ENCODE measurements at regions of chr22 and their contacts with region 1.

Region 1: GRCh38 chr22:20777420-20778177 is 3.7 kb downstream of the SERPIND1 start:
- DNase-seq: peak; percentile 97 to 99 (median 98)
- ATAC-seq: peak; percentile 97
- H3K4me3 ChIP-seq: no peak overlapping the region
- H3K27ac ChIP-seq: peak overlapping the region; percentile 69; the same call in 2 of the 3 replicates
- H3K4me1 ChIP-seq: peaks cover 21 to 32% of the 10 kb centered on the region in 2 experiments
- H3K27me3 ChIP-seq: no peaks in the 10 kb centered on the region
- CTCF ChIP-seq: peak in 2 of 3 experiments; percentile 90 to 99; a peak in 4 of 6 replicates
- EP300 ChIP-seq: peak; percentile 100
- POLR2A ChIP-seq: no peak
- RAD21 ChIP-seq: peak in 1 of 2 experiments; percentile 97; a peak in 2 of 4 replicates

Region 2: DNA sequence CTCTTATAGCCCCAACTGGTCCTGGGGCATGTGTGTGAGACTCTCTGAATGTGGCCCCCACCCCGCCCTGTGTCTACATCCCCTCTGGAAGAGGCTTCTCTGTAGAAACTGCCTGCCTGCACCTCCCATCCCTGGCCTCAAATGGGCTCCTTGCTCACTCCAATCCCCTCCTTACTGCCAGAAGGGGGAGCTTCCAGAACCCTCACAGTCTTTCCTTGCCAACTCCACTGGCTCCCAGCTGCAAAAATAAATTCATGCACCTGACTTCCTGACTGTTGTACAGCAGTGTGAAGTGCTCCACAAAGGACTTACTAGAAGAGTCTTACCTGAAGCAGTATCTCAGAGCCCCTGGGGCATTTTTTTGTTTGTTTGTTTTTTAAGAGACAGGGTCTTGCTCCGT is 18.9 kb before region 1 on chr22:
- CTCF ChIA-PET with region 1: interaction called, 4 read pairs
- POLR2A ChIA-PET with region 1: interaction called, 24 read pairs
- in situ Hi-C with region 1: no loop called
- intact Hi-C with region 1: no loop called
- DNase-seq: peak in 1 of 4 experiments; percentile 64
- ATAC-seq: peak; percentile 86
- H3K4me3 ChIP-seq: no peak overlapping the region
- H3K27ac ChIP-seq: no peak overlapping the region
- H3K4me1 ChIP-seq: no peaks in the 10 kb centered on the region
- H3K27me3 ChIP-seq: no peaks in the 10 kb centered on the region
- CTCF ChIP-seq: peak; percentile 64 to 76 (median 75)
- EP300 ChIP-seq: no peak
- POLR2A ChIP-seq: no peak
- RAD21 ChIP-seq: peak in 1 of 2 experiments; percentile 59; a peak in 2 of 4 replicates

Region 3: DNA sequence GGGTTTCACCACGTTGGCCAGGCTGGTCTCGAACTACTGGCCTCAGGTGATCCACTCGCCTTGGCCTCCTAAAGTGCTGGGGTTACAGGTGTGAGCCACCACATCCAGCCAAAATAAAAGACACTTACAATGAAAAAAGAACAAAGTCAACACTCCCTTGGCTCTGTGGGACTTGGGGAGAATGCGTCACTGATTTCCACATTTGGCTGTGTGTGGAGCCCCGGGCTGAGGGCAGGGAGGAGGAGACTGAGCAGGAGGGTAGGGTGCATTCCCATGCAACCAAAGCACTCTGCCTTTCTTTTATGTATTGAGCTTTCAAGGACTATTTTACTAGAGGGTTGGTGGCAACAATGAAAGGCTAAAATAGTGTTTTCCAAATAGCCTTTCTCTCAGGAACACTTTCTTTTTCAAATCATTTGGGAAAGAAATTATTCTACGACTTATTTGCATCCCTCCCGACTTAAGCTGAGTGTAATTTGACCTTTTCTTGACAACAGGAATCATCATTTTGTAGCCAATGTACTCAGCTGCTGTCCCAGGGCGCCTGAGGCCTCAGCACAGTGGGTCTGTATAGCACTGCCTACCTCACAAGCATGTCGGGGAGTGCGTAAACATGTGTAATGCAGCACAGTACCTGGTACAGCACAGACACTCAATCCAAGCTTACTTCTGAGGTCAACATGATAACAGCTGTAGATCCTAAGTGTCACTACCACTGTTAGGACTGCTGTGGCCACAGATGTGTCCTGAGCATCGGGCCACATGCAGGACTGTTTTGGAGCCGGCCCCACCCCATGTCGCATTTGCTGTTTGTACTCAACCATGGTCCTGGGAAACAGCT is 13.7 kb before region 1 on chr22:
- CTCF ChIA-PET with region 1: interaction called, 4 read pairs
- POLR2A ChIA-PET with region 1: interaction called, 24 read pairs
- in situ Hi-C with region 1: no loop called
- intact Hi-C with region 1: no loop called
- DNase-seq: no peak
- ATAC-seq: no peak
- H3K4me3 ChIP-seq: no peak overlapping the region
- H3K27ac ChIP-seq: no peak overlapping the region
- H3K4me1 ChIP-seq: peaks cover 2 to 4% of the 10 kb centered on the region in 2 experiments; a peak in 4 of 5 replicates
- H3K27me3 ChIP-seq: no peaks in the 10 kb centered on the region
- CTCF ChIP-seq: no peak
- EP300 ChIP-seq: no peak
- POLR2A ChIP-seq: no peak
- RAD21 ChIP-seq: no peak

Region 4: GRCh38 chr22:20852076-20852475 is 74.5 kb after region 1 on chr22:
- CTCF ChIA-PET with region 1: no interaction called
- POLR2A ChIA-PET with region 1: interaction called, 7 read pairs
- in situ Hi-C with region 1: no loop called
- intact Hi-C with region 1: loop called (anchors 2 kb)
- DNase-seq: peak; percentile 50 to 66 (median 58)
- ATAC-seq: peak; percentile 59
- H3K4me3 ChIP-seq: no peak overlapping the region
- H3K27ac ChIP-seq: 0 out of 3 replicates have a peak overlapping the region, but pooled peaks have one; percentile 0
- H3K4me1 ChIP-seq: peaks cover 40 to 46% of the 10 kb centered on the region in 2 experiments
- H3K27me3 ChIP-seq: no peaks in the 10 kb centered on the region
- CTCF ChIP-seq: peak in 2 of 3 experiments; percentile 43 to 64; a peak in 3 of 6 replicates
- EP300 ChIP-seq: peak; percentile 65; the same call in 1 of the 2 replicates
- POLR2A ChIP-seq: no peak
- RAD21 ChIP-seq: no peak

Region 5: GRCh38 chr22:20981787-20982562 is 204.4 kb after region 1 on chr22 and contains the start of gene LZTR1:
- CTCF ChIA-PET with region 1: no interaction called
- POLR2A ChIA-PET with region 1: interaction called, 3 read pairs
- in situ Hi-C with region 1: no loop called
- intact Hi-C with region 1: loop called (anchors 5 kb)
- DNase-seq: peak; percentile 99 to 100 (median 100)
- ATAC-seq: peak; percentile 96
- H3K4me3 ChIP-seq: peak within 1 kb of the TSS; percentile 54
- H3K27ac ChIP-seq: peak within 1 kb of the TSS; percentile 86
- H3K4me1 ChIP-seq: peaks cover 19 to 48% of the 10 kb centered on the region in 2 experiments
- H3K27me3 ChIP-seq: peaks cover 3 to 9% of the 10 kb centered on the region in 2 experiments; a peak in 3 of 5 replicates
- CTCF ChIP-seq: peak; percentile 99 to 100 (median 99)
- EP300 ChIP-seq: no peak
- POLR2A ChIP-seq: no peak
- RAD21 ChIP-seq: peak; percentile 97
- polyA plus RNA-seq, gene LZTR1: 2.2 to 3.1 TPM

Region 6: DNA sequence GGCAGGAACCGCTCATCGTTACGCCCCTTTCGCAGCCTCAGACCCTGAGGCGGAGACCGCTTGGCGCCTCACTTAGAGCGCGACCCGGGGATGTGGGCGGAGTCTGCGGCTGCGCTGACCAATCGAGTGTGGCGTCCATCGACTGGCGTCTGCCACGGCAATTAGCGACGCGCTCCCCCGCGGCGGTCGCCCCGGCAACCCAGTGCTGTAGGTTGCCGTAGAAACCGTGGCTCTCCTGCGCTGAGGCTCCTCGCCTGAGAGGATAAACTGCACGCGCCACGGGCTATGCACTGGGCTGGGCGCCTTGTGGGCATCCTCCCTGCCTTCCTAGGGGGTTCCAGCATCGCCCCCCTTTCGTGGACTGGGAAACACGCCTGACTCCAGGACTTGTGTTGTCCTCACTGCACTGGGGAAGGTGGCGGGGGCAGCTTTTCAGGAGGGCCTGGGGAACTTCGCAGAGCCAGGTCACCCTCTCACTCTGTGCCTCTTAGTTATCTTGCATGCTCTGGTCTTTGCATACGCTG is 236.7 kb after region 1 on chr22:
- CTCF ChIA-PET with region 1: no interaction called
- POLR2A ChIA-PET with region 1: no interaction called
- in situ Hi-C with region 1: no loop called
- intact Hi-C with region 1: no loop called
- DNase-seq: peak; percentile 100
- ATAC-seq: peak; percentile 91
- H3K4me3 ChIP-seq: peak overlapping the region; percentile 44
- H3K27ac ChIP-seq: peak overlapping the region; percentile 67
- H3K4me1 ChIP-seq: peaks cover 26 to 46% of the 10 kb centered on the region in 2 experiments
- H3K27me3 ChIP-seq: no peaks in the 10 kb centered on the region; a peak in 1 of 5 replicates
- CTCF ChIP-seq: no peak; a peak in 1 of 6 replicates
- EP300 ChIP-seq: peak; percentile 75
- POLR2A ChIP-seq: no peak
- RAD21 ChIP-seq: no peak